Caco-2 (cell line): ENCODE measurements at regions of chr12 and their contacts with region 1.

Region 1: DNA sequence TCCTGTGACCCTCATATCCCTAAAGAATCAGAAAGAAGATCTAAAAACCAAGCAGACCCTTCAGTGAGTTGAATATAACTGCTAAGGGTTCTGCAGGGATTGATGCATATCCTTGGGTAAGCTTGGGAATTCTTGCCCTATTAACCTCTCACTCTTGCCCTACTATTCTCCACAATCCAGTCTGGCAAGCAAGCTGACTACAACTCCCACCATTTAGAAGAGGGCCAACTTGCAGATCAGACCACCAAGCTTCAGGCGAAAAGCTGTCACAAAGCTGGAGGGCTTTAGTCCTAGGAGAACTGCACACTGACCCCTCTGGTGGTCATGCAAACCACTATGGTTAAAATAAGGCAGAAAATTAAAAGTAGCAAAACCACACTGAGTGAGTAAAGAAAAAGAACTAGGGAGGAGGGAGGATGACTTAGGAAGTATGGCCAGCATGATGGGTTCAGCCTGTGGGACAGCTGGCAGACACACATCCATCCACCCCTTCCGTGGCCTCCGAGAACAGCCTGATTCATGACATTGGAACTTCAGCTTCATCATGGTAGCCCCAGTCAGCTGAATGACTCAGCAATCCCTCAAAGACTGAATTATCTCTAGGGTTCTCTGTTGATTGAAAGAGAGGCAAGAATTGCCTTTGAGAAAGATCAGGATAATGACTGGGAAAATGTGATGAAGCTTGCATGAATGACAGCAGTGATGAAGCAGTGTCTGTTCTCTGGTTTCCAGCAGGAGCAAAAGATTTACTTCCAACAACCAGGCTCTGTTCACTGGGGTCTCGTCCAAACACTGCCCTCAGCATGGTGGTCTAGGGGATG is 24.5 kb downstream of the PITPNM2 start:
- DNase-seq: peak; percentile 40 to 75
- H3K4me3 ChIP-seq: no peak overlapping the region
- H3K4me3 Mint-ChIP-seq: no peak overlapping the region
- H3K27ac Mint-ChIP-seq: peak overlapping the region; percentile 88
- H3K4me1 ChIP-seq: peaks cover 17% of the 10 kb centered on the region
- H3K4me1 Mint-ChIP-seq: peaks cover 10% of the 10 kb centered on the region
- H3K27me3 ChIP-seq: no peaks in the 10 kb centered on the region
- H3K27me3 Mint-ChIP-seq: no peaks in the 10 kb centered on the region
- CTCF ChIP-seq: peak in 1 of 2 experiments; percentile 23

Region 2: DNA sequence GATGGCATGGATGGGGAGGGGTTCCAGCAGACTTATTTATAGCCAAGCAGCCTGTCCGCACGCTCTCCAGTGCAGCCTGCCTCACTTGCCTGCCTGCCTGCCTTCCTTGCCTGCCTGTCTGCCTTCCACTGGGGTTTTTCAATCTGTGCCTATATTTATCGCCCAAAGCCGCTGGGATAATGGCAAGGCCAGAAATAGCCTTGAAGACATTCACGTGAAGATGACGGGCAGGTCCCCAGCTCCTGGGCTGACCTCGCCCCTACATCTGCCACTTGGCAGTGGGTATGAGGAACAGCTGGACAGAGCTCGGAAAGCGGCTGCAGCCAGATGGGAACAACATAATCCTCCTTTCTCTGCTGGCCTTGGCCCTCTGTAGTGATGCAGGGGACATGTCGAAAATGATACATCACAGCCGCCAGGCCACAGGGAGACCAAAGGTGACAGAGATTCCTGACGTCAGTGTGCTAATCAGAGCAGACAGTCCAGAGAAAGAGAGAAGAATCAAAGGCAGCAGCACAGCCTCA is 28.8 kb before region 1 on chr12:
- CTCF ChIA-PET with region 1: no interaction called
- POLR2A ChIA-PET with region 1: no interaction called
- intact Hi-C with region 1: no loop called
- DNase-seq: no peak
- H3K4me3 ChIP-seq: no peak overlapping the region
- H3K4me3 Mint-ChIP-seq: no peak overlapping the region
- H3K27ac Mint-ChIP-seq: no peak overlapping the region
- H3K4me1 ChIP-seq: peaks cover 20% of the 10 kb centered on the region
- H3K4me1 Mint-ChIP-seq: peaks cover 15% of the 10 kb centered on the region
- H3K27me3 ChIP-seq: no peaks in the 10 kb centered on the region
- H3K27me3 Mint-ChIP-seq: no peaks in the 10 kb centered on the region
- CTCF ChIP-seq: no peak

Region 3: GRCh38 chr12:123748161-123748560 is 621.8 kb after region 1 on chr12:
- CTCF ChIA-PET with region 1: interaction called, 12 read pairs
- POLR2A ChIA-PET with region 1: no interaction called
- intact Hi-C with region 1: no loop called
- DNase-seq: no peak
- H3K4me3 ChIP-seq: no peak overlapping the region
- H3K4me3 Mint-ChIP-seq: no peak overlapping the region
- H3K27ac Mint-ChIP-seq: no peak overlapping the region
- H3K4me1 ChIP-seq: no peaks in the 10 kb centered on the region
- H3K4me1 Mint-ChIP-seq: no peaks in the 10 kb centered on the region
- H3K27me3 ChIP-seq: no peaks in the 10 kb centered on the region
- H3K27me3 Mint-ChIP-seq: no peaks in the 10 kb centered on the region
- CTCF ChIP-seq: no peak